WTC11 (cell line): ENCODE measurements at regions of chr22 and their contacts with region 1.

Region 1: GRCh38 chr22:43187171-43188099 is 501 bp upstream of the TTLL12 start:
- DNase-seq: peak; percentile 95
- ATAC-seq: peak; percentile 86
- H3K4me3 Mint-ChIP-seq: peak overlapping the region; percentile 65
- H3K27ac Mint-ChIP-seq: peak overlapping the region; percentile 74
- H3K4me1 Mint-ChIP-seq: peaks cover 24% of the 10 kb centered on the region
- H3K27me3 Mint-ChIP-seq: peaks cover 22% of the 10 kb centered on the region
- CTCF ChIP-seq: peak; percentile 69

Region 2: DNA sequence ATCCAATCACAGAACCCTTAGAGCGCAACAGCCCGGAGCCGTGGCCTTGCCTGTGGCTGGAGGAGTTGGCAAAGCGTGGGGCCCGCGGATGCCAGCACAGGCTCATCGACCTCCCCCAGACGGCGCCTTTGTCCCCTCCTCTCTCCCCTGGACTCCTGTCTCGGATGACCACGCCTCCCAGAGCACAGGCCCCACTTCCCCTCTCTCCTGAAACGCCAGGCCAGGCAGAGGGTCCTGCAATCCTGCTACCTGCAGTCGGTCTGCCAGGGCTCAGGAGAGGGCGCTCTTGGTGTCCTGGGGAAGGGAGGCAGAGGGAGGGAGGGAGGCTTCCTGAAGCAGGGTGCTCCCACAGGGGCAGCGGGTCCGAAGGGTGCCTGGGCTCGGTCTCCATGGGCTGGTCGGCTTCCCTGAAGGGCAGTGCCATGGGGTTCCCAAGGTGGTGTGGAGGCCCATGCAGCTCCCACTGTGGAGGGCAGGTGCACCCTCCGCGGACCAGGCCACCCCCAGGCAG is 16.1 kb after region 1 on chr22:
- CTCF ChIA-PET with region 1: interaction called, 24 read pairs
- POLR2A ChIA-PET with region 1: no interaction called
- DNase-seq: peak; percentile 81
- ATAC-seq: peak; percentile 94
- H3K4me3 Mint-ChIP-seq: no peak overlapping the region
- H3K27ac Mint-ChIP-seq: no peak overlapping the region; the same call in 1 of the 2 replicates
- H3K4me1 Mint-ChIP-seq: peaks cover 9% of the 10 kb centered on the region
- H3K27me3 Mint-ChIP-seq: no peaks in the 10 kb centered on the region
- CTCF ChIP-seq: no peak

Region 3: DNA sequence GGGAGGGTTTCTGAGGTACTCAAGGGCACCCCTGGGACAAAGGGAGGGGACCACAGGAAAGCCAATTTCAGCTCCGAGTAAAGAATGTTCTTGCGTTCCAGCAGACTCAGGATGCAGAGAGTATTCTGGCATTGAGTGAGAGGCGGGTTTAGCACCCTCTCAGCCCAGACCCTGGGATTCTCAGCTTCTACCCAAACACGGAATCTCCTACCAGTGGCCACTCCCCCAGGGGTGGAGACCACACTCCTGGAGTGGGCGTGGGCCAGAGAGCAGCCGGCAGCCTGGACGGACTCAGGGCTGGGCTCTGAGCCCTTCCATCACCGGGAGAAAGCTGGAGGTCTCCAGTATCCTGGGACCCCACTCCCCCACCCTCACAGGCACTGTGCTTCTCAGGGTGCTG is 25.6 kb after region 1 on chr22:
- CTCF ChIA-PET with region 1: interaction called, 16 read pairs
- POLR2A ChIA-PET with region 1: interaction called, 4 read pairs
- DNase-seq: peak; percentile 60
- ATAC-seq: peak; percentile 92
- H3K4me3 Mint-ChIP-seq: no peak overlapping the region
- H3K27ac Mint-ChIP-seq: no peak overlapping the region
- H3K4me1 Mint-ChIP-seq: peaks cover 12% of the 10 kb centered on the region
- H3K27me3 Mint-ChIP-seq: no peaks in the 10 kb centered on the region
- CTCF ChIP-seq: no peak

Region 4: GRCh38 chr22:43279867-43280522 is 92.6 kb after region 1 on chr22:
- CTCF ChIA-PET with region 1: no interaction called
- POLR2A ChIA-PET with region 1: no interaction called
- DNase-seq: peak; percentile 32
- ATAC-seq: peak; percentile 44
- H3K4me3 Mint-ChIP-seq: no peak overlapping the region
- H3K27ac Mint-ChIP-seq: no peak overlapping the region
- H3K4me1 Mint-ChIP-seq: peaks cover 47% of the 10 kb centered on the region
- H3K27me3 Mint-ChIP-seq: no peaks in the 10 kb centered on the region
- CTCF ChIP-seq: no peak